CD4-positive, alpha-beta memory T cell (primary cell): ENCODE measurements at regions of chr2 and their contacts with region 1.

Region 1: GRCh38 chr2:236512902-236513435 is 56.7 kb upstream of the ACKR3 start:
- DNase-seq: peak; percentile 58 to 72 (median 64)
- H3K4me3 ChIP-seq: no peak overlapping the region
- H3K4me3 Mint-ChIP-seq: no peak overlapping the region
- H3K27ac ChIP-seq: no peak overlapping the region
- H3K27ac Mint-ChIP-seq: no peak overlapping the region
- H3K4me1 ChIP-seq: peaks cover 9% of the 10 kb centered on the region
- H3K4me1 Mint-ChIP-seq: peaks cover 0 to 5% (median 3%) of the 10 kb centered on the region in 4 donors
- H3K27me3 ChIP-seq: no peaks in the 10 kb centered on the region
- H3K27me3 Mint-ChIP-seq: peaks cover 3 to 4% of the 10 kb centered on the region in 2 donors

Region 2: GRCh38 chr2:236215196-236216046 is 297.5 kb before region 1 on chr2:
- CTCF ChIA-PET with region 1: no interaction called
- POLR2A ChIA-PET with region 1: no interaction called
- intact Hi-C with region 1: no loop called
- DNase-seq: no peak
- H3K4me3 ChIP-seq: no peak overlapping the region
- H3K4me3 Mint-ChIP-seq: no peak overlapping the region
- H3K27ac ChIP-seq: no peak overlapping the region
- H3K27ac Mint-ChIP-seq: peak overlapping the region in 1 of 7 donors; percentile 24
- H3K4me1 ChIP-seq: no peaks in the 10 kb centered on the region
- H3K4me1 Mint-ChIP-seq: no peaks in the 10 kb centered on the region
- H3K27me3 ChIP-seq: no peaks in the 10 kb centered on the region
- H3K27me3 Mint-ChIP-seq: peaks cover 18 to 21% of the 10 kb centered on the region in 2 donors

Region 3: DNA sequence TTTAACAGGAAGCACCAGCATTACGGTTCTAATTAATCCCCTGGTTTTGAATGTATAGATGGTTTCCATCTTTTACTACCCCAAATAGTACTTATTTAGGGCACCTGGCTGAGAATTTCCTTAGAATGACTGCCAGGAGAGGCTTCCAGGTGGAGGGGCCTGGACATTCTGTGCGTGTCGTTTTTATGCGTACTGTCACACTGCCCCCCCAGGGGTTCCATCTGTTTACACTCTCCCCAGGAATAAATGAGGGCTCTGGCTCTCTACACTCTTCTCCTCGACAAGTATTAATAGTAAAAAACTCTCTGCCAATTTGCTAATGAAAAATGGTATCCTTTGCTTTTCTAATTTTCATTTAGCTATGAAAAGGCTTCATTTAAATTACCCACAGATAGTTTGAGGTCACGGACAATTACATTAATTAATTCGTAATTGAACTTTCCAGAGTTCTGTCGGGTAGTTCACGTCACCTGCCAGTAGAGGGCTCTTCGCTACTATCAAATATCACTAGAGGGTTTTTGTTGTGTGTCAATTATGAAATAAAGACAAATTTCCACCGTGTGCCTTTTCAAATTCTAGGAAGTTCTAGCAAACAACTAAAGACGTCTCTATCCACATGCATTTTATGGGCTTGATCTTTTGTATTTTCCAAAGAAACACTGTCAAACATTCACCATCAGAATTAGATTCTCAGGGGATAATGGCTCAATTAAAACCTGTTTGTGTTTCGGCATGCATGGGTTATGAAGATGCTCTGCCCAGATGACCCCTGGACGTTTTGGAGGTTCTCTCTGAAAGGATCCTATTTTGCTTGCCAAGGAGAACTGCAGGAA is 160.0 kb before region 1 on chr2:
- CTCF ChIA-PET with region 1: interaction called, 16 read pairs
- POLR2A ChIA-PET with region 1: no interaction called
- intact Hi-C with region 1: loop called (anchors 1 kb)
- DNase-seq: peak in 4 of 5 donors; percentile 39 to 51 (median 45)
- H3K4me3 ChIP-seq: no peak overlapping the region
- H3K4me3 Mint-ChIP-seq: peak overlapping the region in 1 of 8 donors; percentile 56
- H3K27ac ChIP-seq: no peak overlapping the region
- H3K27ac Mint-ChIP-seq: peak overlapping the region in 2 of 7 donors; percentile 12 to 72
- H3K4me1 ChIP-seq: no peaks in the 10 kb centered on the region
- H3K4me1 Mint-ChIP-seq: peaks cover 4 to 7% (median 6%) of the 10 kb centered on the region in 4 donors
- H3K27me3 ChIP-seq: no peaks in the 10 kb centered on the region
- H3K27me3 Mint-ChIP-seq: peaks cover 10 to 20% of the 10 kb centered on the region in 2 donors

Region 4: DNA sequence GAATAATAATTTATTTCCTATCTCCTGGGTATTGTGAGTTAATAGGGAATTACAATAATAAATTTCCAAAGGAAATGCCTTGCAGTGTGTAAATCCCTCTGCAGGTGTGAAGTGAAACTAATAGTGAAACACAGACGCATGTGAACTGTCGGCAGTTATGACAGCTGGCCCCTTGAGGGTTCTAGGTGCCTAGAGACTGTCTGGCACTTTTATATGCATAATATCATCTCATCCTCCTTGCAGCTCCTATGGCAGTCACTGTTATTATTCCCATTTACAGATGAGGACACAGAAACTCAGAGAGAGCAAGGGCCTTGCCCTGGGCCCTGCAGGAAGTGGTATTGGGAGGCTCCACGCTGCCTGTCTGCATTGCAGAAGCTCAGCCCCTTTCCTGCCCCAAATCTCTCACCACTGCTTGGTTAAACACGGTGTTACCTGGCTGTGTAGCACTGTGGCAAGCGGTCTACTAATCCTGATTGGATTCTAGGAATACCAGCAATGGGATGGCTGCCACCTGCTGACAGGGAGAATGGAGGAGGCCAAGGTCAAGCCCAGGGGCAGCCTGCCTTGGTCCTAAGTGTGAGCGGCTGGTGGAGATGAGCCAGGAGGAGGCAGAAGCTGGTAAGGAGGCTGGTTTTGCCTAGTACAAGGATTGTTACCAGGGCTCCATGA is 23.9 kb after region 1 on chr2:
- CTCF ChIA-PET with region 1: interaction called, 52 read pairs
- POLR2A ChIA-PET with region 1: interaction called, 14 read pairs
- intact Hi-C with region 1: loop called (anchors 1 kb)
- DNase-seq: peak; percentile 56 to 66 (median 58)
- H3K4me3 ChIP-seq: peak overlapping the region; percentile 71 to 72
- H3K4me3 Mint-ChIP-seq: peak overlapping the region; percentile 97 to 100 (median 100)
- H3K27ac ChIP-seq: peak overlapping the region; percentile 69
- H3K27ac Mint-ChIP-seq: peak overlapping the region; percentile 90 to 100 (median 97)
- H3K4me1 ChIP-seq: peaks cover 45% of the 10 kb centered on the region
- H3K4me1 Mint-ChIP-seq: peaks cover 38 to 69% (median 51%) of the 10 kb centered on the region in 4 donors
- H3K27me3 ChIP-seq: no peaks in the 10 kb centered on the region
- H3K27me3 Mint-ChIP-seq: no peaks in the 10 kb centered on the region

Region 5: GRCh38 chr2:236558993-236559978 is 46.3 kb after region 1 on chr2:
- CTCF ChIA-PET with region 1: interaction called, 20 read pairs
- POLR2A ChIA-PET with region 1: interaction called, 3 read pairs
- intact Hi-C with region 1: no loop called
- DNase-seq: no peak
- H3K4me3 ChIP-seq: no peak overlapping the region
- H3K4me3 Mint-ChIP-seq: peak overlapping the region in 3 of 8 donors; percentile 25 to 57 (median 27)
- H3K27ac ChIP-seq: no peak overlapping the region
- H3K27ac Mint-ChIP-seq: peak overlapping the region in 5 of 7 donors; percentile 12 to 53 (median 28)
- H3K4me1 ChIP-seq: peaks cover 31% of the 10 kb centered on the region
- H3K4me1 Mint-ChIP-seq: peaks cover 32 to 55% (median 46%) of the 10 kb centered on the region in 4 donors
- H3K27me3 ChIP-seq: no peaks in the 10 kb centered on the region
- H3K27me3 Mint-ChIP-seq: no peaks in the 10 kb centered on the region

Region 6: DNA sequence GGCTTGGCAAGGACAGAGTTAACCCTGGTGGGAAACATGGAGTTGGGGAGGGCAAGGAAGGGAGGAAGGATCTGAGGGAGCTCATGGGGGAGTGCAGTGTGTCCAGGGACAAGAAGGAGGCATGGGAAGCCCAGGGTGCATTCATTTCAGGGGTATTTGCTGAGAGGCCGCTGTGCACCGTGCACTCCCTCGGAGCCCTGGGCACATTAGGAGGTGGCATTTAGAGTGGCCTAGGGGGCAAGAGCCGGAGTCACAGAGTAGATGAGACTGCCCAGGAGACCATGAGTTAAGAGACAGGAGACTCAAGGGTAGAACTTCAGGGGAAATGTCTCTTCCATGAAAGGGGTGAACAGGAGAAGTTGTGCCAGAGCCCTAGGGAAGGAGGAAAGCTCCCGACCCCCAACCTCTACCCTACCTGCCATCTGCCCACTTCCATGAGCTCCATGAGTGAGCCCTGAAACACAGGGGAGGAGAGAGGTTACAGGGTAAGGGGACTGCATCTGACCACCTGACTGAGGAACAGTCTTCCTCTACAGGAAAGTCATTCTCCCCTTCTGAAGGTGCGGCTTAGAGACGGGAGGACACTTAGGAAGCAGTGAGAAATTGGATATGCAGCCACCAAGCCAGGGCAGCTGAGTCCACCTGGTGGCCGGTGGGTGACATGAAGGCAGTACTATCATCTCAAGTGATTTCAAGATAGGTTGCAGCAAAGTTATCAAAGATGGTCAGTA is 514.2 kb after region 1 on chr2:
- CTCF ChIA-PET with region 1: interaction called, 21 read pairs
- POLR2A ChIA-PET with region 1: no interaction called
- intact Hi-C with region 1: no loop called
- DNase-seq: peak; percentile 21 to 41 (median 29)
- H3K4me3 ChIP-seq: no peak overlapping the region
- H3K4me3 Mint-ChIP-seq: no peak overlapping the region
- H3K27ac ChIP-seq: no peak overlapping the region
- H3K27ac Mint-ChIP-seq: no peak overlapping the region
- H3K4me1 ChIP-seq: no peaks in the 10 kb centered on the region
- H3K4me1 Mint-ChIP-seq: peaks cover 0 to 2% (median 0%) of the 10 kb centered on the region in 4 donors
- H3K27me3 ChIP-seq: no peaks in the 10 kb centered on the region
- H3K27me3 Mint-ChIP-seq: peaks cover 0 to 1% of the 10 kb centered on the region in 2 donors

Region 7: DNA sequence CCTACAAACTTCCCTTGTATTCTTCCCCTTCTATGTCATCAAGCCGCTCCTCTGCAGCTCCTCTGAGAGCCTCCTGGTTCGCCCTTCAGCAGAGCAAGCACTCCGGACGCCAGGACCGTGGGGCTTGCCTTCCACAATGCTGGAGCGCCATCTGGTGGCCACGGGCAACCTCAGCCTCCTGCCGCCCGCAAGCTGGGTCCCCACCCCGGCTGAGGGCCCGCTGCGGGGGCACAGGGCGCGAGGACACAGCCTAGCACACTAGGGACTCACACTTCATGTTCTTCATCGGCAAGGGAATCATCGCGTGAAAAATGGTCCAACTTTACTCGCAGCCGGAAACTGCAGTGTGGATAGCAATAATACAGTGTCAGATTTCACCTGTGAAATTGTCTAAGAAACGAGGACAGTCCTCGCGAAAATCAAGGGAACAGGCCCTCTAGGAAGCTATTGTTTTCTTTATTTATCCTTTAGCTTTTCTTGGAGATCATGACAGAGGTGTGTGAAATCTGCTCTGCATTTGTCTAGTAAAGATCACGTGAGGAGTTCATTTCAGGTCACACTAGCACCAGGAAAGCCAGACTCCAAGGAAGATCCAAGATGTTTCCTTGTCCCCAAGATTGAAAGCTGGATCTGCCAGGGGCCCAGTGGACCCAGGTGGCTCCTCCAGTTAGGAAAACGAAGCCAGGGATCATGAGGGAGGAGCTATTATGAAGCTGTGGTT is 1059.2 kb after region 1 on chr2:
- CTCF ChIA-PET with region 1: no interaction called
- POLR2A ChIA-PET with region 1: no interaction called
- intact Hi-C with region 1: loop called (anchors 5 kb)
- DNase-seq: peak; percentile 73 to 80 (median 77)
- H3K4me3 ChIP-seq: no peak overlapping the region
- H3K4me3 Mint-ChIP-seq: no peak overlapping the region
- H3K27ac ChIP-seq: no peak overlapping the region
- H3K27ac Mint-ChIP-seq: peak overlapping the region in 1 of 7 donors; percentile 53
- H3K4me1 ChIP-seq: no peaks in the 10 kb centered on the region
- H3K4me1 Mint-ChIP-seq: peaks cover 0 to 6% (median 3%) of the 10 kb centered on the region in 4 donors
- H3K27me3 ChIP-seq: no peaks in the 10 kb centered on the region
- H3K27me3 Mint-ChIP-seq: peaks cover 4 to 6% of the 10 kb centered on the region in 2 donors